Sigmoid colon (tissue), 7 donors: ENCODE measurements at regions of chr9 and their contacts with region 1.

Region 1: DNA sequence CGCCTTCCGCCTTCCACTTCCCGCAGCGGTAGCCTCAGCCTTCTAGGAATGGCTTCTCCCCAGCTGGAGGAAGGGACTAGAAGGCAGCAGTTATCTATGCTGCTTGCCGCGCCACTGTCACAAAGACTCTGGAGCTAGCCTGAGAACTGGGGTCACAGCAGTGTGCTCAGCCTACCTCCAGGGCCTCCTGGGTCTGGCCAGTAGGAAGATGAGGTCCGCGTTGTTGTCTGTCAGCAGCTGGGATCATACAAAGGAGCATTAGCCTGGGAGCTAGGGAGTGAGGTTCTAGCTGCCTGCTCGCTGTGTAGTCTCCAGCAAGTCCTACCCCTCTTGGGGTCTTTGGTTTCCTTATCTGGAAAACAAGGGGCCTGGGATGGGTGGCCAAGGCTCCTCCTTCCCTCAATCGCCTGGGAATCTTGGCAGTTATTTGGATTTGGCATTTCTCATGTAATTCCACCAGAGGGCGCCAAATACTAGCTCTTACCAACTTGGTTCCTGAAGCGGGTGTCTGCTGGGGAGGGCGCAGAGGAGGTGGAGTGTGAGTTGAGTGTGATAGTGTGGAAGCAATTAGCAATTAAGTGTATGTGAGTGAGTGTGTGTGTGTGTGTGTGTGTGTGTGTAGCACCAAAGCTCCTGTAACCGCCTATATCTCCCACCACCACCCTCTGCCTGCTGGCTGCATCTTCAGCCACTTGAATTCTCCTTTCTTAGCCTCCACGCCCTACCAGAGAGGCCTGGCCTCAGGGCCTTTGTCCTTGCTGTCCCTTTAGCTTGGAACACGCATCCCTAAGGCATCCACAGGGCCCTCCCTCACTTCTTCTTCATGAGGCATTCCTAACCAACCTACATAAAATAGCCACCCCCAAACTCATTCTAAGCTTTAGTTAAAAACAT is 97.1 kb downstream of the ENTREP1 start:
- DNase-seq: peak; percentile 77
- H3K4me3 ChIP-seq: no peak overlapping the region
- H3K27ac ChIP-seq: no peak overlapping the region
- H3K4me1 ChIP-seq: no peaks in the 10 kb centered on the region
- H3K27me3 ChIP-seq: no peaks in the 10 kb centered on the region
- CTCF ChIP-seq: peak; percentile 60 to 77 (median 70)
- EP300 ChIP-seq: no peak
- POLR2A ChIP-seq: no peak

Region 2: GRCh38 chr9:69186841-69187611 is 235.1 kb before region 1 on chr9:
- intact Hi-C with region 1: no loop called
- DNase-seq: no peak
- H3K4me3 ChIP-seq: no peak overlapping the region
- H3K27ac ChIP-seq: peak overlapping the region in 3 of 4 donors; percentile 31 to 80 (median 41)
- H3K4me1 ChIP-seq: peaks cover 2 to 39% (median 23%) of the 10 kb centered on the region in 4 donors
- H3K27me3 ChIP-seq: no peaks in the 10 kb centered on the region
- CTCF ChIP-seq: no peak
- EP300 ChIP-seq: no peak
- POLR2A ChIP-seq: no peak

Region 3: DNA sequence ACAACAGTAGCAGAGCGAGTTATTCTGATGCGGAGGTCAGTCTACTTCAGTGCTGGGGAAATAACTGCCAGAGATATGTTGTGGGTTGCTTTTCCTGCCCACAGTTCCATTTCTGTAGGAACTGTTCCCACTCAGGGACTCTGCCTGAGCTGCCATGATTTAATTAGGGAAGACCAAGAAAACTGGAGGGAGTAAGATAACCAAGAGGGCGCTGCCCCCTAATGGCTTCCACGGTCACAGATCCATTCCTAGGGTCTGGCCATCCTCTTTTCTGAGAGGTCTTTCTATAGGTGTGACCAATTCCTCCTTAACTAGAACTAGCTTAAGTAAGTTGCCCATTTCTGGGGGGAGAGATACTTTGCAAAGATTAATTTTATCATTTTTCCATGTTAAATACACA is 124.1 kb after region 1 on chr9:
- intact Hi-C with region 1: loop called (anchors 2 kb)
- DNase-seq: no peak
- H3K4me3 ChIP-seq: no peak overlapping the region
- H3K27ac ChIP-seq: no peak overlapping the region
- H3K4me1 ChIP-seq: peaks cover 0 to 9% (median 6%) of the 10 kb centered on the region in 4 donors
- H3K27me3 ChIP-seq: no peaks in the 10 kb centered on the region
- CTCF ChIP-seq: no peak
- EP300 ChIP-seq: no peak
- POLR2A ChIP-seq: no peak

Region 4: DNA sequence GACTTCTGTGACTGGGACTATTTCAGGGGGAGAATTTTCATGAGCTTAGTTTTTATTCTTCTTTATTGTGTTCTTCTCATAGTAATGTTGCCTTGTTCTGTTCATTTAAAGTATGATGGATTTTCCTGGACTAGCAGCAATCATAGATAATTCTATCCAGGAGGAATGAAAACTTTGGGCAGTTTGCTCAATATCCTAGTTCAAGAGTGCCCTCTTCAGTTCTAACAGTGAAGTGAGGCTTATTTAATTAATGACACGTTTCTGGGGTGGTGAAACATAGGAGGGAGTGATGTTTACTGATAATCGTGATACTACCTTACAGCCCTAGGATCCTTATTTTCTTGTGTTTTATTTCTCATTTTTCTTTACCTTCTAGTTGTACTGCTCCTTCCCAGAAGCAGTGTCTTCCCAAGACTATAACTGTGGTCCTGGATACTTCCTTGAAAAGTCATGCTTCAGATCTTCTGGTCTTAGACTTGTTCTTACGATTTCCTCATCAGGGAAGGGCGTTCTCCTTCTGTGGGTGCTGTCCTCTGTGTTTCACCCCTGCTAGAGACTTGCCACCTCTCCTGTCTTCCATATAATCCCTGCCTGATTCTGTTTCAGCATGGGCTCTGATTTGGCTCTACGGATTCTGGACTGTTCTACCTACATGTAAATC is 455.8 kb after region 1 on chr9:
- intact Hi-C with region 1: loop called (anchors 2 kb)
- DNase-seq: no peak
- H3K4me3 ChIP-seq: no peak overlapping the region
- H3K27ac ChIP-seq: no peak overlapping the region
- H3K4me1 ChIP-seq: peaks cover 0 to 10% (median 4%) of the 10 kb centered on the region in 4 donors
- H3K27me3 ChIP-seq: no peaks in the 10 kb centered on the region
- CTCF ChIP-seq: peak in 2 of 4 experiments; percentile 23 to 45
- EP300 ChIP-seq: no peak
- POLR2A ChIP-seq: no peak

Region 5: DNA sequence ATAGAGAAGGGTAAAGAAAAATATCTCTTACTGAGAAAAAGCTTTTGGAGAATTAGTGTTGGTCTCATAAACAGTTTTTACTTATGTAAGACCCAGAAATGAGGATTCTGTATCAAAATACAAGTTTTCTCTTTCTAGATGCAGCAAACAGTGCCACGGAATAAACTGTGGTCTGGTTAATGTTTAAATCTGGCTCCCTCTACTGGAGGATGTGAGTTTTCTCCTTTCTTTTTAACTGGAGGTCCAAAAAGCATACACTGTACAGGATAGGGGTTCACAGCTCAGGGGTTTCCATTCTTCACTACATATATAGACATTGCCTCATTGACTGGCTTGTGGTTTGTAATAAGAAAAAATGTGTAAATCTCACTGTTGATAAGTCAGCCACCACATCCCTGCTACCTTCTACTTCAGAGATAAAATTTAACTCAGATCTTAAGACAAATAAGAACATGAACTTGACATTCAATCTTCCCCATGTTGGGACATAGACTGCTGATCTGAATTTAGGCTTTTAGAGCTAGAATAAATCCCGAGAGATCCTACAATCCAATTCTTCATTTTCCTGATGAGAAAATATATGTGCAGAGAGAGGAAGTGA is 497.4 kb after region 1 on chr9:
- intact Hi-C with region 1: loop called (anchors 2 kb)
- DNase-seq: no peak
- H3K4me3 ChIP-seq: no peak overlapping the region
- H3K27ac ChIP-seq: no peak overlapping the region
- H3K4me1 ChIP-seq: no peaks in the 10 kb centered on the region
- H3K27me3 ChIP-seq: no peaks in the 10 kb centered on the region
- CTCF ChIP-seq: peak; percentile 18 to 67 (median 38)
- EP300 ChIP-seq: no peak
- POLR2A ChIP-seq: no peak

Region 6: DNA sequence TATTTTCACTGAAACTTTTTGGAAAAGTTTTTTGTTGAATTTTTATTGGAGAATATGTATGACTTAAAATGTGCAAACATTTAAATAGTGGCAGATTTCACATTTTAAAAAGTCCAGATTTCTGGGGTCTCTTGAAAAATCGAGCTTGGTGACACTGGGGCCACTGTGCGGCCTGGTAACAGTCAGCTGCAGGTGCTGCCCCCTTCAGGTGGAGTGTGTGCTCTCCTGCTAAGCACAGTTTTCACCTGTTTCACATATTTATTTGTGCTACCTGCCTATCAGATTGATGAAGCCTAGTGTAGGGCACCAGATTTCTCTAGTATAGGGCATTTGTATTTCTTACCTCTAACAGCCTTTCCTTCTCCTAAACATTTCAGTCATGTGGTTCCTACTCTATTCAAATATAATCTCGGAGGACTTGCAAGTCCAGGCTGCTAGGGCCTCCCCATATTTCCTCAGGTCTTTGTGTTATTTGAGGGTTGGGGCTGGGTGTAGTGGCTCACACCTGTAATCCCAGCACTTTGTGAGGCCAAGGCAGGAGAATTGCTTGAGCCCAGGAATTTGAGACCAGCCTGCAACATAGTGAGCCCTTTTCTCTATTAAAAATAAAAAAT is 1088.1 kb after region 1 on chr9:
- intact Hi-C with region 1: no loop called
- DNase-seq: no peak
- H3K4me3 ChIP-seq: no peak overlapping the region
- H3K27ac ChIP-seq: no peak overlapping the region
- H3K4me1 ChIP-seq: peaks cover 0 to 7% (median 0%) of the 10 kb centered on the region in 4 donors
- H3K27me3 ChIP-seq: no peaks in the 10 kb centered on the region
- CTCF ChIP-seq: peak; percentile 11 to 43 (median 28)
- EP300 ChIP-seq: no peak
- POLR2A ChIP-seq: no peak